Naive thymus-derived CD4-positive, alpha-beta T cell (primary cell): ENCODE measurements at regions of chr3 and their contacts with region 1.

Region 1: GRCh38 chr3:49802719-49803464 is at the start of gene INKA1:
- DNase-seq: peak; percentile 77 to 89 (median 87)
- ATAC-seq: peak; percentile 93
- H3K4me3 ChIP-seq: peak within 1 kb of the TSS; percentile 89
- H3K4me3 Mint-ChIP-seq: peak within 1 kb of the TSS; percentile 82 to 95 (median 90)
- H3K27ac ChIP-seq: peak within 1 kb of the TSS; percentile 84
- H3K27ac Mint-ChIP-seq: peak within 1 kb of the TSS; percentile 80 to 96 (median 91)
- H3K4me1 ChIP-seq: peaks cover 11 to 41% of the 10 kb centered on the region in 2 donors
- H3K4me1 Mint-ChIP-seq: peaks cover 23 to 47% (median 41%) of the 10 kb centered on the region in 7 donors
- H3K27me3 ChIP-seq: no peaks in the 10 kb centered on the region
- H3K27me3 Mint-ChIP-seq: peaks cover 0 to 20% (median 0%) of the 10 kb centered on the region in 5 donors
- total RNA-seq, gene INKA1: 0.65 to 2.2 (median 1.8) TPM

Region 2: GRCh38 chr3:49539659-49540560 is 263.0 kb before region 1 on chr3:
- CTCF ChIA-PET with region 1: no interaction called
- POLR2A ChIA-PET with region 1: no interaction called
- intact Hi-C with region 1: loop called in 1 of 2 experiments (anchors 1 kb)
- DNase-seq: peak; percentile 77 to 97 (median 85)
- ATAC-seq: peak; percentile 99
- H3K4me3 ChIP-seq: peak overlapping the region; percentile 90
- H3K4me3 Mint-ChIP-seq: peak overlapping the region; percentile 75 to 84 (median 80)
- H3K27ac ChIP-seq: peak overlapping the region; percentile 78
- H3K27ac Mint-ChIP-seq: peak overlapping the region in 6 of 9 donors; percentile 14 to 69 (median 33)
- H3K4me1 ChIP-seq: peaks cover 4 to 5% of the 10 kb centered on the region in 2 donors
- H3K4me1 Mint-ChIP-seq: peaks cover 0 to 9% (median 5%) of the 10 kb centered on the region in 7 donors
- H3K27me3 ChIP-seq: no peaks in the 10 kb centered on the region
- H3K27me3 Mint-ChIP-seq: peaks cover 0 to 24% (median 4%) of the 10 kb centered on the region in 5 donors

Region 3: GRCh38 chr3:49723628-49724551 is 79.0 kb before region 1 on chr3 and contains the start of gene GMPPB:
- CTCF ChIA-PET with region 1: no interaction called
- POLR2A ChIA-PET with region 1: interaction called, 5 read pairs
- intact Hi-C with region 1: loop called in 1 of 2 experiments (anchors 1 kb)
- DNase-seq: peak; percentile 83 to 95 (median 87)
- ATAC-seq: peak; percentile 85
- H3K4me3 ChIP-seq: peak within 1 kb of the TSS; percentile 89
- H3K4me3 Mint-ChIP-seq: peak within 1 kb of the TSS; percentile 91 to 98 (median 96)
- H3K27ac ChIP-seq: peak within 1 kb of the TSS; percentile 96
- H3K27ac Mint-ChIP-seq: peak within 1 kb of the TSS; percentile 82 to 99 (median 97)
- H3K4me1 ChIP-seq: peaks cover 11 to 17% of the 10 kb centered on the region in 2 donors
- H3K4me1 Mint-ChIP-seq: peaks cover 12 to 37% (median 31%) of the 10 kb centered on the region in 7 donors
- H3K27me3 ChIP-seq: no peaks in the 10 kb centered on the region
- H3K27me3 Mint-ChIP-seq: no peaks in the 10 kb centered on the region
- total RNA-seq, gene GMPPB: 38.3 to 60.4 (median 43.9) TPM

Region 4: DNA sequence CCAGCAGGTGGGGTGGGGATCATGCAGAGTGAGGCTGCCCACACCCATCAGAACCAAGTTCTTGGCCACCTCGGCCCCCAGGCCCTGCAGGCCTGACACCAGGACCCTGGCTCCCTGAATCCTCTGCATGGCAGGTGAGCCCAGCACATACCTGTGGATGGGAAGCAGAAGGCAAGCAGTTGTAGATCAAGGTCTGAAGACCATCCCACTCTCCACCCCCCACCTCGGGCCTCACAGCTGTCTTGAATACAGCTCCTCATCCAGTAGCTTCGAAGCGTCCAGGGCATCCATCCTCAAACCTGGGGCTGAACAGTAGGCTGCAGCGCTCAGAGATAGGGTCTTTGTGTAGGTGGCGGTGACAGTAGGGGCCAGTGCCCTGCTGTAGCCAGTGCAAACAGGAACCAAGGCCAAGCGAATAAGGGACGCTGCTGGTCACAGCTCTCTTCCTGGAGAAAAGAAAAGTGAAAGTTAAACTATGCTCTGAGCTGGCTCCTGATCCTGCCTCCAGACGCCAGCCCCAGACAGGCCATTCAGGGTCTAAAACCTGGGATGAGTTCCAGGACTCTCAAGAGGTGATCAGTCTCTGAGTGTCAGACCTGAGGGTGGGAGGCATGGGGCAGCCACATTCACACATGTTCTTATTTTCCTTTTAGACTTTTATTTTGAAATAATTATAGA is 10.7 kb after region 1 on chr3 and contains the start of gene UBA7:
- CTCF ChIA-PET with region 1: interaction called, 31 read pairs
- POLR2A ChIA-PET with region 1: interaction called, 87 read pairs
- intact Hi-C with region 1: loop called (anchors 1 kb)
- DNase-seq: peak in 8 of 9 donors; percentile 26 to 54 (median 48)
- ATAC-seq: peak; percentile 91
- H3K4me3 ChIP-seq: peak within 1 kb of the TSS; percentile 90
- H3K4me3 Mint-ChIP-seq: peak within 1 kb of the TSS; percentile 93 to 99 (median 97)
- H3K27ac ChIP-seq: peak within 1 kb of the TSS; percentile 86
- H3K27ac Mint-ChIP-seq: peak within 1 kb of the TSS; percentile 95 to 100 (median 98)
- H3K4me1 ChIP-seq: peaks cover 12 to 18% of the 10 kb centered on the region in 2 donors
- H3K4me1 Mint-ChIP-seq: peaks cover 20 to 45% (median 43%) of the 10 kb centered on the region in 7 donors
- H3K27me3 ChIP-seq: no peaks in the 10 kb centered on the region
- H3K27me3 Mint-ChIP-seq: no peaks in the 10 kb centered on the region
- total RNA-seq, gene UBA7: 273 to 318 (median 287) TPM

Region 5: GRCh38 chr3:49856181-49857005 is 53.5 kb after region 1 on chr3 and contains the start of gene TRAIP:
- CTCF ChIA-PET with region 1: interaction called, 4 read pairs
- POLR2A ChIA-PET with region 1: interaction called, 4 read pairs
- intact Hi-C with region 1: loop called (anchors 1 kb)
- DNase-seq: peak; percentile 89 to 96 (median 93)
- ATAC-seq: peak; percentile 100
- H3K4me3 ChIP-seq: peak within 1 kb of the TSS; percentile 75
- H3K4me3 Mint-ChIP-seq: peak within 1 kb of the TSS; percentile 80 to 94 (median 88)
- H3K27ac ChIP-seq: peak within 1 kb of the TSS; percentile 71
- H3K27ac Mint-ChIP-seq: peak within 1 kb of the TSS; percentile 70 to 95 (median 92)
- H3K4me1 ChIP-seq: peaks cover 10 to 11% of the 10 kb centered on the region in 2 donors
- H3K4me1 Mint-ChIP-seq: peaks cover 4 to 19% (median 13%) of the 10 kb centered on the region in 7 donors
- H3K27me3 ChIP-seq: no peaks in the 10 kb centered on the region
- H3K27me3 Mint-ChIP-seq: no peaks in the 10 kb centered on the region
- total RNA-seq, gene TRAIP: 4.1 to 22.5 (median 5.7) TPM

Region 6: GRCh38 chr3:49929331-49930240 is 126.7 kb after region 1 on chr3 and contains the start of gene MON1A:
- CTCF ChIA-PET with region 1: interaction called, 4 read pairs
- POLR2A ChIA-PET with region 1: interaction called, 3 read pairs
- intact Hi-C with region 1: loop called (anchors 1 kb)
- DNase-seq: peak; percentile 65 to 94 (median 74)
- ATAC-seq: peak; percentile 97
- H3K4me3 ChIP-seq: peak within 1 kb of the TSS; percentile 92
- H3K4me3 Mint-ChIP-seq: peak within 1 kb of the TSS; percentile 82 to 90 (median 86)
- H3K27ac ChIP-seq: peak within 1 kb of the TSS; percentile 91
- H3K27ac Mint-ChIP-seq: peak within 1 kb of the TSS; percentile 78 to 92 (median 88)
- H3K4me1 ChIP-seq: peaks cover 6 to 13% of the 10 kb centered on the region in 2 donors
- H3K4me1 Mint-ChIP-seq: peaks cover 6 to 36% (median 31%) of the 10 kb centered on the region in 7 donors
- H3K27me3 ChIP-seq: no peaks in the 10 kb centered on the region
- H3K27me3 Mint-ChIP-seq: no peaks in the 10 kb centered on the region
- total RNA-seq, gene MON1A: 4.6 to 12.6 (median 8.6) TPM

Region 7: GRCh38 chr3:50227390-50228183 is 424.7 kb after region 1 on chr3:
- CTCF ChIA-PET with region 1: no interaction called
- POLR2A ChIA-PET with region 1: no interaction called
- intact Hi-C with region 1: loop called (anchors 5 kb)
- DNase-seq: peak; percentile 86 to 96 (median 91)
- ATAC-seq: peak; percentile 91
- H3K4me3 ChIP-seq: peak overlapping the region; percentile 88
- H3K4me3 Mint-ChIP-seq: peak overlapping the region; percentile 89 to 98 (median 96)
- H3K27ac ChIP-seq: peak overlapping the region; percentile 77
- H3K27ac Mint-ChIP-seq: peak overlapping the region; percentile 86 to 97 (median 93)
- H3K4me1 ChIP-seq: peaks cover 9 to 12% of the 10 kb centered on the region in 2 donors
- H3K4me1 Mint-ChIP-seq: peaks cover 16 to 36% (median 34%) of the 10 kb centered on the region in 7 donors
- H3K27me3 ChIP-seq: no peaks in the 10 kb centered on the region
- H3K27me3 Mint-ChIP-seq: peaks cover 0 to 17% (median 0%) of the 10 kb centered on the region in 5 donors